Caco-2 (cell line): ENCODE measurements at regions of chr10 and their contacts with region 1.

Region 1: DNA sequence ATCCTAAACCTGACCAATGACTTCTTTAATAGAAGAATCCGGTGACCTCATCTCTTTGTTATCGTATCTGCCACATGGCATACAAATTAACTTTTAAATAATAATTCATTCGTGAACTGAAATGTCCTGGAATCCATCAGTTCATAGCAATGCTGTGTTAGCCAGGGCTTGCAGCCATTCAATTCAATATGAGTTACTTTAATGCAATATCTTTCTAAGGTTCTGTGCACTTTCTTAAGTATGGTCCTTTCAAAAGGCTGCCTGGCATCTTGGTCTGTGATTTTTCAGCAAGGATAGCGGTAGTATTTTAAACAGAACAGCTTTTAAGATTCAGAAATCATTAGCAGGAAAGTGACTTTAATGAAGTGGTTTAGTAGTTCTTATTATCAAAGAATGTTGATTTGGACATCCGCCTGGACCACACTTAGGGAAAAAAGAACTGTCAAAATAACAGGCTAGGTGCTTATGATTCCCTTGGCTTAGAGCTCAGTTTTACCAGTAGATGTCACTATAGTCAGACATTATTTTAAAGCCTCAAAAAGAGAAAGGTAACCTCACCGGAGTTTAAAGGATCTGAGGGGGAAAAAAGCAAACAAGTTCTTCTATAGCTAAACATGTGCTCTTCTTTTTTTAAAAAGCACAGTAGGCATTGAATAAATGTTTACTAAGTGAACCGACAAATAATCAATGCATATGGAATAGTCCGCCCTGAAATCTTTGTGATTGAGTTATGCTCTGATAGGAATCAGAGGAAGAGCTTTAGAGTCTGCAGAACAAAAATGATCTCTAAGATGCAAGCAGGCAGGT is 22.7 kb downstream of the SLC35G1 start:
- DNase-seq: peak in 1 of 2 experiments; percentile 34
- H3K4me3 ChIP-seq: no peak overlapping the region
- H3K4me3 Mint-ChIP-seq: peak overlapping the region; percentile 31
- H3K27ac Mint-ChIP-seq: no peak overlapping the region
- H3K4me1 ChIP-seq: peaks cover 40% of the 10 kb centered on the region
- H3K4me1 Mint-ChIP-seq: peaks cover 35% of the 10 kb centered on the region
- H3K27me3 ChIP-seq: no peaks in the 10 kb centered on the region
- H3K27me3 Mint-ChIP-seq: no peaks in the 10 kb centered on the region
- CTCF ChIP-seq: peak; percentile 49 to 76

Region 2: GRCh38 chr10:93816123-93816747 is 100.2 kb before region 1 on chr10:
- CTCF ChIA-PET with region 1: interaction called, 19 read pairs
- POLR2A ChIA-PET with region 1: no interaction called
- intact Hi-C with region 1: loop called (anchors 5 kb)
- DNase-seq: peak; percentile 66 to 71
- H3K4me3 ChIP-seq: no peak overlapping the region
- H3K4me3 Mint-ChIP-seq: peak overlapping the region; percentile 7
- H3K27ac Mint-ChIP-seq: peak overlapping the region; percentile 2
- H3K4me1 ChIP-seq: peaks cover 13% of the 10 kb centered on the region
- H3K4me1 Mint-ChIP-seq: peaks cover 13% of the 10 kb centered on the region
- H3K27me3 ChIP-seq: no peaks in the 10 kb centered on the region
- H3K27me3 Mint-ChIP-seq: peaks cover 12% of the 10 kb centered on the region
- CTCF ChIP-seq: peak; percentile 76 to 90

Region 3: GRCh38 chr10:94000638-94001415 is 84.4 kb after region 1 on chr10:
- CTCF ChIA-PET with region 1: no interaction called
- POLR2A ChIA-PET with region 1: no interaction called
- intact Hi-C with region 1: loop called (anchors 2 kb)
- DNase-seq: peak; percentile 29 to 47
- H3K4me3 ChIP-seq: no peak overlapping the region
- H3K4me3 Mint-ChIP-seq: peak overlapping the region; percentile 6
- H3K27ac Mint-ChIP-seq: peak overlapping the region; percentile 11
- H3K4me1 ChIP-seq: peaks cover 65% of the 10 kb centered on the region
- H3K4me1 Mint-ChIP-seq: peaks cover 54% of the 10 kb centered on the region
- H3K27me3 ChIP-seq: no peaks in the 10 kb centered on the region
- H3K27me3 Mint-ChIP-seq: no peaks in the 10 kb centered on the region
- CTCF ChIP-seq: no peak

Region 4: GRCh38 chr10:94043431-94043990 is 127.1 kb after region 1 on chr10:
- CTCF ChIA-PET with region 1: no interaction called
- POLR2A ChIA-PET with region 1: no interaction called
- intact Hi-C with region 1: no loop called
- DNase-seq: no peak
- H3K4me3 ChIP-seq: no peak overlapping the region
- H3K4me3 Mint-ChIP-seq: no peak overlapping the region
- H3K27ac Mint-ChIP-seq: no peak overlapping the region
- H3K4me1 ChIP-seq: peaks cover 8% of the 10 kb centered on the region; the same call in 1 of the 2 replicates
- H3K4me1 Mint-ChIP-seq: no peaks in the 10 kb centered on the region
- H3K27me3 ChIP-seq: no peaks in the 10 kb centered on the region
- H3K27me3 Mint-ChIP-seq: no peaks in the 10 kb centered on the region
- CTCF ChIP-seq: no peak

Region 5: DNA sequence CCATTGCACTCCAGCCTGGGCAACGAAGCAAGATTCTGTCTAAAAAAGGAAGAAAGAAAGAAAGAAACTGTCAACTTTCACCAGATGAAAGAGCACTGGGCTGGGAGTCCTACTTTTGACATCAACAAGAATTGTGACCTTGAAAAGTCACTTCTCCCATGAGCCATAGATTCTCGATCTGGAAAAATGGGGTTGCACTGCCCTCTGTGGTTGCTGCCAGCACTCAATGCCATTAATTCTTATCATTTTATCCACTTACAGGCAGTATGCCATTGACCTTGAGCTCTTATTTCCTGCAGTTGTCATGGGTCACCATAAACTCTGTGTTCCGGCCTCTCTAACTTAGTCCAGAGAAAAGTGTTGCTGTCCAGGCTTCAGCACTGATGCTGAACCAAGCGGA is 309.1 kb after region 1 on chr10:
- CTCF ChIA-PET with region 1: interaction called, 4 read pairs
- POLR2A ChIA-PET with region 1: no interaction called
- intact Hi-C with region 1: loop called (anchors 1 kb)
- DNase-seq: peak in 1 of 2 experiments; percentile 9
- H3K4me3 ChIP-seq: no peak overlapping the region
- H3K4me3 Mint-ChIP-seq: no peak overlapping the region
- H3K27ac Mint-ChIP-seq: no peak overlapping the region
- H3K4me1 ChIP-seq: no peaks in the 10 kb centered on the region
- H3K4me1 Mint-ChIP-seq: no peaks in the 10 kb centered on the region
- H3K27me3 ChIP-seq: no peaks in the 10 kb centered on the region
- H3K27me3 Mint-ChIP-seq: no peaks in the 10 kb centered on the region
- CTCF ChIP-seq: no peak

Region 6: DNA sequence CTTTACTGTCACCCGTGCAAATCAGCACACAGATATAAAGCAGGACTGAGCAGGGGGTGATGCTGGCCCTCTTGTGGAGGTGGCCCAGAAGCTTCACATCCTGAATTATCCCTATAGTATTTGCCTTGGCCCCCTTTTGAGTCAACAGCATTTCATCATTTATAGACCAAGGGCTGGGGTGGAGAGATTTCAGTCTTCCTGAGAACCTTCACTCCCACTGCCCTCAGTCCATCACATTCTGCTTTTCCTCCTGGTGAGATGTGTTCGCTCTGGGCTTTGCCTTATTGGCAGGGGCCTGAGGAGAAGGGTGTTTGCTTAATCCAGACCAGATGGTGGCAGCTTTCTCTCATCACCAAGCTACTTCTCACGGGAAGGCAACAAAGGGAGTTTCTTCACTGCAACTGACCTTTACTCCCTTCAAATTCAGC is 398.6 kb after region 1 on chr10:
- CTCF ChIA-PET with region 1: interaction called, 33 read pairs
- POLR2A ChIA-PET with region 1: no interaction called
- intact Hi-C with region 1: loop called (anchors 1 kb)
- DNase-seq: peak; percentile 49
- H3K4me3 ChIP-seq: no peak overlapping the region
- H3K4me3 Mint-ChIP-seq: no peak overlapping the region
- H3K27ac Mint-ChIP-seq: peak overlapping the region; percentile 55
- H3K4me1 ChIP-seq: peaks cover 38% of the 10 kb centered on the region
- H3K4me1 Mint-ChIP-seq: peaks cover 5% of the 10 kb centered on the region
- H3K27me3 ChIP-seq: no peaks in the 10 kb centered on the region
- H3K27me3 Mint-ChIP-seq: no peaks in the 10 kb centered on the region
- CTCF ChIP-seq: peak in 1 of 2 experiments; percentile 0